ENCODE measurements at regions of chr14 and their contacts with region 1.

Region 1: DNA sequence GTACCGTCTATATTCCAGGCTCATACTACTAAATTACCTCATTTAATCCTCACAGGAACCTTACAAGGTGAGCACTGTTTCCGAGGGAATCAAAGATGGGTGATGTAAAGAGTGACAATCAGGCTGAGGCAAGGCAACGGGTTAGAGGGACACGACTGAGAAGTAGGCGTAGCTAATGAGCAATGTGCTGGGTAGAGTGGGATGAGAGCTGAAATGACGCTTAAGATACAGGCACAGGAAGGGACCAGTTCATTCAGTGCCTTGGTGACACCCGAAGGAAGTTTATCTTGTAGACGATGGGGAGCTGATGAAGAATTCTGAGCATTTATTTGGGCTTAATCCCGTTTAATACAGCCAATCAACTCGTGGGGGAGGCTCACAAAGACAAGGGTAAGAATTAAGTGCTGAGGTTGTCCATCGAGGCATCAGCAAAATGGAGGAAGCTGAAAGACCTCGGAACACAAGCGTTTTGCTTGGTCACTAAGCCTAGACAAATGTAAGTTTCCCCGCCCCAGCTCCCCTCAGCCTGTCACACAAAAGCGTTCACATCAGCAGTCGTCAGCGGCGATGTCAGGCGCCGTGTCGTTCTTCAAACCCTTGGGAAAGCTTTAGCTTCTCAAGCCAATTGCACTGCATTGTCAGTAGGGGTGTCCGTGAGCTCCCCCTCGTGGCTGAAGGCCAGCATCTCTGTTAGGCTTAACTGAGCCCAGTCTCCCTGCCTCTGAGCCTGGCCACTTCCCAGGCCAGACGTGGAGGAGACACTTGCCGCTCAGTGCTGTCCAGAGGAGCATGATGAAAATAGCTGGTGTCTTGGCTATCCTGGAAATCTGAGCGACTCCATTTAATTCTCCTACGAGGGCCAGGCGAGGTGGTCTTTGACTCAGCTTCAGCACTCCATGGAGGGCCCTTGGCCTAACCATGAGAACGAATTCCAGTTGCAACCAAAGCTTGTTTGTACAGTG is 288.5 kb upstream of the G2E3 start:
- DNase-seq: peak; percentile 72
- H3K4me3 Mint-ChIP-seq: no peak overlapping the region
- H3K27ac Mint-ChIP-seq: no peak overlapping the region
- H3K4me1 Mint-ChIP-seq: no peaks in the 10 kb centered on the region
- H3K27me3 Mint-ChIP-seq: peaks cover 5% of the 10 kb centered on the region

Region 2: DNA sequence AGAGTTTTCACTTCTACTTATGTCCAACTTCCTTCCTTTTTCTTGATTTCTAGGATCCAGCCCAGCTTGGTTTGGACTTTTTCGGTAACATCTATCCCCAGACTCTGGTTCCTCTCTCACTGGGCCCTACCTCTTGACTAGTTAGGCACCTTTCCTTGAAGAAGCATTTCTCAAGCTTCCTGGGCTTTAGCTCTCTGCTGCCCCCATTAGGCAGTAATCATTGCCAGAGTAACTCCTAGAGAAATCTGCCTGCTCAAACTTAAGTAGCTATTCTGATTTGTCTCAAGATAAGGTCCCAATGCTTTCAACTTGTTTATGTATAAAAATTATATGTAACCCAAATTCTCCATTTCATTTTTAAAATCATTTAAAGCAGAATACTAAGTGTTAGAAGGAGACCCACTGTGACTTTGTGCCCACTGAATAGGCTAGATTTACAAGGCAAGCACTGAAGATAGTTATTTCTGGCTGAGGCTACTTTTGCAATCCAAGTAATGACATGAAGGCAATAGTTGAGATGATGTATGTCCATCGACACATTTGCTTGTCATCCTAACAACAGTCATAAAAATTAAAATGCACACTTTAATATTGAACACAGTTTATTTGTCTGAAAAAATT is 13.5 kb after region 1 on chr14:
- CTCF ChIA-PET with region 1: interaction called, 11 read pairs
- DNase-seq: no peak
- H3K4me3 Mint-ChIP-seq: no peak overlapping the region
- H3K27ac Mint-ChIP-seq: no peak overlapping the region
- H3K4me1 Mint-ChIP-seq: no peaks in the 10 kb centered on the region
- H3K27me3 Mint-ChIP-seq: no peaks in the 10 kb centered on the region

Measured in activated naive CD4-positive, alpha-beta T cell treated with anti-CD3 and anti-CD28 coated beads, Interleukin-2, amount 10 ng/mL, durations not matched to agents 7 days and 5 days (primary cell).